Activated naive CD8-positive, alpha-beta T cell treated with anti-CD3 and anti-CD28 coated beads, Interleukin-2, amount 10 ng/mL, durations not matched to agents 7 days and 5 days (primary cell): ENCODE measurements at regions of chr15 and their contacts with region 1.

Region 1: DNA sequence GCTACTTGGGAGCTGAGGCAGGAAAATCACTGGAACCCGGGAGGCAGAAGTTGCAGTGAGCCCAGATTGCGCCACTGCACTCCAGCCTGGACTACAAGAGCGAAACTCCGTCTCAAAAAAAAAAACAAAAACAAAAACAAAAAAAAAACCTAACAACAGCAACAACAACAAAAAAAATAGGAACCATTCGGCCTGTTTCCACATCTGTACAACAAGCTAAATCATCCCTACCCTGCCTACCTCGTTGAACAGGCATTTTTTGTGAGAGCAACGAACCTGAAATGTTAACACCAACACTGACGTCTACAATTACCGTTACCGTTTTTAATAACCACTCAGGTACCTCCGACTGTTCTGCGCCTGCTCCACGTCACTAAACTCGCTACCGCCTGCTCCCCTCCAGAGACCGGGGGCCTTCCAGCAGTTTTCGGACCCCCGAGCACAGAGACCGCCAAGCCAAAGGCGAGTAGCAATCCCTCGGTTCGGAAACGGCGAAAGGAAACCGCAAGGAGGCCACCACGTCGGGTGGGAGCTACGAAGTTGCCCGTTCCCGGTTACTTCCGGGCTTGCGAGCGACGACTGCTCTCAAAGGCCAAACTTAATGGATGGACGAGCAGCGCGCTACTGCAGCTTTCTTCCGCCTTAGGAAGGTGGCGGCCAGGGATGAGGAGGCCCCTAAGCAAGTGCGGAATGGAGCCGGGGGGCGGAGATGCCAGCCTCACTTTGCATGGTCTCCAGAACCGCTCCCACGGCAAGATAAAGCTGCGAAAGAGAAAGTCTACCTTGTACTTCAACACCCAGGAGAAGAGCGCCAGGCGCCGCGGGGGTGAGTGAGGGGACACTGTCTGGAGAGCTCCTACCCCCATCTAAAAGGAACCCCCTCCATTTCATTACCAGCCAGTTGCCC is at the starts of genes PIGB and PIGBOS1:
- DNase-seq: peak; percentile 83
- ATAC-seq: peak; percentile 88
- H3K4me3 Mint-ChIP-seq: peak within 1 kb of the TSS; percentile 99
- H3K27ac Mint-ChIP-seq: peak within 1 kb of the TSS; percentile 97
- H3K4me1 Mint-ChIP-seq: peaks cover 40% of the 10 kb centered on the region
- H3K27me3 Mint-ChIP-seq: no peaks in the 10 kb centered on the region
- total RNA-seq, gene PIGB: 17.6 to 26.1 TPM
- total RNA-seq, gene PIGBOS1: 10.3 to 13.8 TPM

Region 2: GRCh38 chr15:55196458-55197361 is 122.1 kb before region 1 on chr15 and contains the start of gene RSL24D1:
- POLR2A ChIA-PET with region 1: interaction called, 24 read pairs
- DNase-seq: peak; percentile 88
- ATAC-seq: peak; percentile 98
- H3K4me3 Mint-ChIP-seq: no peak within 1 kb of the TSS
- H3K27ac Mint-ChIP-seq: no peak within 1 kb of the TSS
- H3K4me1 Mint-ChIP-seq: peaks cover 12% of the 10 kb centered on the region
- H3K27me3 Mint-ChIP-seq: no peaks in the 10 kb centered on the region
- total RNA-seq, gene RSL24D1: 90.8 to 96.0 TPM